Calu3 (cell line): ENCODE measurements at regions of chr14 and their contacts with region 1.

Region 1: DNA sequence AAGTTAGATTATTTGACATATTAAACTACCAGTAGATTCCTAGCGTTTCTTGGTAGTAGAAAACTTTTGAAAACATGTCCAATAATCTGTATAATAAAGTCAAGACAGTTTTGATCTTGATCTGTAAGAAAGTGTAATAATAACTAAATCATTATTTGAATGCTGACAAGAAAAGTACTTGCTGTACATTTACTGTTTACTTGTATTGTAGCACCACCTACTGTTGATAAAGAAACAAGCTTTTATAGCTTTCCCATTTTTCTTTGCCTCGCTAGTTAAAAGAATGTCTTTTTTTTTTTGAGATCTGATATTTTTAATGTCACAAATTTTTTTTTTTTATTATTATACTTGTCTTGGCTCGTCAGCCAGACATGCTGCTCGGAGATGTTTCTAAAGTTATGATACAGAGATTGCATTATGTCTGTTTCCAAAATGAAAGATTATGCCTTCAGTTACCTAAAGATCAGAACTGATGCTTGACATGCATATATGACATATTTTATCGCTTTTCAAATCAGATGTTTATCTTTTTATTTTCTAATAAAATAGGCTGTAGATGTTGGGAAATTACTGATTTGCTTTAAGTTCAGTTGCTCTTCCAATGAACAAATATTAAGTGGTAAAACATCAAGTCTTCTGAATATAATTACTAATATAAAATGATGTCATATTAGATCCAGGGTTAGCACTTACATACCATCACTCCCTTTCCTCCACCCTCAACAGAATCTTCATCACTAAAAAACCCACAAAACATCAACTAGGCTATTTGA is 140.5 kb downstream of the AKAP6 start:
- DNase-seq: no peak
- H3K4me3 Mint-ChIP-seq: no peak overlapping the region
- H3K27ac Mint-ChIP-seq: peak overlapping the region; percentile 60
- H3K4me1 Mint-ChIP-seq: peaks cover 41% of the 10 kb centered on the region
- H3K27me3 Mint-ChIP-seq: no peaks in the 10 kb centered on the region
- CTCF ChIP-seq: no peak

Region 2: DNA sequence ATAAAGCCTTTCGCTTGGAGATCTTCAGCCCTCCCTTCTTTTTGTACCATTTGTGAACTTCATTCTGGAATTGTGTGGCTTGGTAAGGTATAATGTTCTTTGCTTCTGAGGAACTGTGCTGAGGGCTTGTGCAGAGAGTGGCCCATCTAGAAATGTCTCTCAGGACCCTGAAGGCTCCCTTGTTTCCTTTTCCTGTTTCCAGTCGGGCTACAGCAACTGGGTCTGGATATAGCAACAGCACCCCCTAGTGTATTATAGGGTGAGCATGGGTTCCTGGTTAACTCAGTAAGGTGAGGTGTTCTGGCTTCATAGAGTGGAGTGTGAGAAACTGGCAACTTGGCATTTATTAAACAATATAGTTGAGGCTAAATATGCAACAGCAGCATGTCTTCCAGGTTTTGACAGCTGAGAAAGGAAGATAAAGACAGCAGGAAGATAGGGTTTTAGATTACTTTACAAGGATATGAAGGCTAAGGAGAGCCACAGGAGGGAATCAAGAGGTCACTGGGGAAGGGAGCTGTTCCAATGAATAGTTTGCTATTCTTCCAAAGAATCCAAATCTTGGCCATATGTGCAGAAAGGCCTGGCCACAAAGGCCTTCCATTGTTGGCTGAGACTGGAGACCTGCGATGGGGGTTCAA is 217.4 kb before region 1 on chr14:
- CTCF ChIA-PET with region 1: interaction called, 15 read pairs
- intact Hi-C with region 1: loop called (anchors 2 kb)
- DNase-seq: peak; percentile 65
- H3K4me3 Mint-ChIP-seq: no peak overlapping the region
- H3K27ac Mint-ChIP-seq: no peak overlapping the region
- H3K4me1 Mint-ChIP-seq: no peaks in the 10 kb centered on the region
- H3K27me3 Mint-ChIP-seq: no peaks in the 10 kb centered on the region
- CTCF ChIP-seq: peak; percentile 58

Region 3: GRCh38 chr14:32382704-32383103 is 86.9 kb before region 1 on chr14:
- CTCF ChIA-PET with region 1: no interaction called
- intact Hi-C with region 1: loop called (anchors 1 kb)
- DNase-seq: peak; percentile 61
- H3K4me3 Mint-ChIP-seq: no peak overlapping the region
- H3K27ac Mint-ChIP-seq: no peak overlapping the region
- H3K4me1 Mint-ChIP-seq: peaks cover 45% of the 10 kb centered on the region
- H3K27me3 Mint-ChIP-seq: no peaks in the 10 kb centered on the region
- CTCF ChIP-seq: peak; percentile 46

Region 4: GRCh38 chr14:32457213-32457920 is 12.2 kb before region 1 on chr14:
- CTCF ChIA-PET with region 1: no interaction called
- intact Hi-C with region 1: no loop called
- DNase-seq: no peak
- H3K4me3 Mint-ChIP-seq: no peak overlapping the region
- H3K27ac Mint-ChIP-seq: no peak overlapping the region
- H3K4me1 Mint-ChIP-seq: no peaks in the 10 kb centered on the region
- H3K27me3 Mint-ChIP-seq: no peaks in the 10 kb centered on the region
- CTCF ChIP-seq: no peak

Region 5: GRCh38 chr14:32509632-32510187 is 40.1 kb after region 1 on chr14:
- CTCF ChIA-PET with region 1: interaction called, 5 read pairs
- intact Hi-C with region 1: loop called (anchors 2 kb)
- DNase-seq: peak; percentile 41
- H3K4me3 Mint-ChIP-seq: peak overlapping the region; percentile 54
- H3K27ac Mint-ChIP-seq: peak overlapping the region; percentile 83
- H3K4me1 Mint-ChIP-seq: peaks cover 45% of the 10 kb centered on the region
- H3K27me3 Mint-ChIP-seq: no peaks in the 10 kb centered on the region
- CTCF ChIP-seq: no peak

Region 6: GRCh38 chr14:32552766-32553165 is 83.2 kb after region 1 on chr14:
- CTCF ChIA-PET with region 1: no interaction called
- intact Hi-C with region 1: no loop called
- DNase-seq: no peak
- H3K4me3 Mint-ChIP-seq: no peak overlapping the region
- H3K27ac Mint-ChIP-seq: no peak overlapping the region
- H3K4me1 Mint-ChIP-seq: no peaks in the 10 kb centered on the region
- H3K27me3 Mint-ChIP-seq: no peaks in the 10 kb centered on the region
- CTCF ChIP-seq: no peak